Mammary epithelial cell (primary cell): ENCODE measurements at regions of chr17 and their contacts with region 1.

Region 1: DNA sequence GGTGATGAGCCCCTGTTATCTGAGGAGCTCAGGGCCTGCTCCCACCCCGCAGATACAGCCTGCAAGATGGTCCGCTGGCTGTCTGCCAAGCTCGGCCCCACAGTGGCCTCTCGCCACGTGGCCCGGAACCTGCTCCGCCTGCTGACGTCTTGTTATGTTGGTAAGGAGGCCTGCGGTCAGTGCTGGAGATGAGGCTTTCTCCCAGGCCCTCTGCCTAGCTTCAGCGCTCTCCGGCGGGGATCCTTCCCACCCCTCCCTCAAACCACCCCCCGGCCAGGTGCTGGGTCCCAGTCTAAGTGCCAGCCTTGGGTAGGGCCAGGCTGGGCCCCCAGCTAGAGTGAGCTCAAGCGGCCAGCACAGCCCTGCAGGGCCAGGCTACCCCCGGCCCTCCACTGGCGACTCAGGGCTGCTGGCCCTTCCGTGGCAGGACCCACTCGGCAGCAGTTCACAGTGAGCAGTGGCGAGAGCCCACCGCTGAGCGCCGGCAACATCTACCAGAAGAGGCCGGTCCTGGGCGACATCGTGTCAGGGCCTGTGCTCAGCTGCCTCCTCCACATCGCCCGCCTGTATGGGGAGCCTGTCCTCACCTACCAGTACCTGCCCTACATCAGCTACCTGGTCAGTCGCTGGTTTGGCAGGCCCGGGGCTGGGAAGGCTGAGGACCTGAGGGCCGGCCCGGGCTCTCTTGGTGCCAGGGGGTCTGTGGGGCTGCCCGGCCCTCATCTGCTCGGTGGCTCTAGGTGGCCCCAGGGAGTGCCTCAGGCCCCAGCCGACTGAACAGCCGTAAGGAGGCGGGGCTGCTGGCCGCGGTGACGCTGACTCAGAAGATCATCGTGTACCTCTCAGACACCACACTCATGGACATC is 6.1 kb downstream of the WDR81 start:
- DNase-seq: peak; percentile 85
- H3K4me3 ChIP-seq: peak overlapping the region in 1 of 3 experiments; percentile 1
- H3K27ac ChIP-seq: peak overlapping the region; percentile 89
- H3K4me1 ChIP-seq: peaks cover 34% of the 10 kb centered on the region
- H3K27me3 ChIP-seq: no peaks in the 10 kb centered on the region
- CTCF ChIP-seq: no peak

Region 2: DNA sequence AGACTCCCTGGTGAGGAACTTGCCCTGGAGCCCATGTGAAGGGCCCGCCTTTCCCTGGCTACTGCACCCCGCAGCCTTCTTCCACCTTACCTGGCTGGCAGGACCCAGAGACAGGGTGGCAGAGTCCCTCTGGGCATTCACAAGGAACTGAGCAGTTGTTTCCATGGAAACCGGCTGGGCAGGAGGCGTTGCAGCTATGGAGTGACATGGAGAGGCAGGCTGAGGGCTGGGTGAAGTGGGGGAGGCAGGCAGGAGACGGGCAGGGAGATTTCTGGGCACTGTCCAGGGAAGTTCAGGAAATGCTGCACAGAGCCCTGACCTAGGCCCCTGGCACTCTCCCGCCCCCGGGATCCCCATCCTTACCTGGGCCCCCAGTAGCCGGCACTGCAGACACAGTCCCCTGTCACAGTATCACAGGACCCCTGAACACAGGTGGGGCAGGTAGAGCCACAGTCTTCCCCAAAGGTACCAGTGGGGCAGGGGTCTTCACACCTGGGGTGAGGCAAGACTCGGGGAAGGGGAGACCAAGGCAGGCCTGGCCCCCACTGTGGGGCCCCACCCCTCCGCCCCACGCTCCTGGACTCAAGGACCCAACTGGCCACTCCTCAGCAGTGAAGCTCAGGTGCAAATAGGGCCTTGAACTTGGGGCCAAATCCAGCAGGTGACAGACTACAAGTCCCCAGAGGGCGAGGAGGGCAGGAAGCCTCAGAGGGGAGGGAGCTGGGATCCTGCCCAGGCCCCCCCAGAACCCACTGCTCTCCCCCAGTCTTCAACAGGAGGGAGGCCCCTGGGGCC is 90.8 kb before region 1 on chr17:
- CTCF ChIA-PET with region 1: no interaction called
- dilution Hi-C with region 1: loop called (anchors 5 kb)
- in situ Hi-C with region 1: no loop called
- intact Hi-C with region 1: no loop called
- DNase-seq: no peak
- H3K4me3 ChIP-seq: no peak overlapping the region
- H3K27ac ChIP-seq: no peak overlapping the region
- H3K4me1 ChIP-seq: peaks cover 15% of the 10 kb centered on the region
- H3K27me3 ChIP-seq: no peaks in the 10 kb centered on the region
- CTCF ChIP-seq: no peak

Region 3: DNA sequence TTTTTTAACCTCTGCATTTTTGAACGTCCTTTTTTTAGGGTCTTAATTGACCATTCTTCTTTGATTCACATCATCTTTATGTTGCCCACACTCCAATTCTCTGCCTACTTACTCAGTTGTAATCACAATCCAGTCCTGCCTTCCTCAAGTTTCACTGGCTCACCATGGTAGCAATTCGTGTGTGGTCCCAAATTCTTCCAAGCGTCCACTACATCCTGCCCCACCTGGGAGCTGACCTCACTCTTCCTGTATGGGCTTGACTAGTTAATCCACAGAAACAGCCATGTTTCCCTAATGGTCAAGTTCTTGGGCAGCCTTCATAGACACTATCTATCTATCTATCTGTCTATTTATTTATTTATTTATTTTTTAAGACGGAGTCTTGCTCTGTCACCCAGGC is 27.5 kb before region 1 on chr17:
- CTCF ChIA-PET with region 1: no interaction called
- dilution Hi-C with region 1: no loop called
- in situ Hi-C with region 1: no loop called
- intact Hi-C with region 1: no loop called
- DNase-seq: no peak
- H3K4me3 ChIP-seq: no peak overlapping the region
- H3K27ac ChIP-seq: no peak overlapping the region
- H3K4me1 ChIP-seq: no peaks in the 10 kb centered on the region
- H3K27me3 ChIP-seq: no peaks in the 10 kb centered on the region
- CTCF ChIP-seq: no peak

Region 4: DNA sequence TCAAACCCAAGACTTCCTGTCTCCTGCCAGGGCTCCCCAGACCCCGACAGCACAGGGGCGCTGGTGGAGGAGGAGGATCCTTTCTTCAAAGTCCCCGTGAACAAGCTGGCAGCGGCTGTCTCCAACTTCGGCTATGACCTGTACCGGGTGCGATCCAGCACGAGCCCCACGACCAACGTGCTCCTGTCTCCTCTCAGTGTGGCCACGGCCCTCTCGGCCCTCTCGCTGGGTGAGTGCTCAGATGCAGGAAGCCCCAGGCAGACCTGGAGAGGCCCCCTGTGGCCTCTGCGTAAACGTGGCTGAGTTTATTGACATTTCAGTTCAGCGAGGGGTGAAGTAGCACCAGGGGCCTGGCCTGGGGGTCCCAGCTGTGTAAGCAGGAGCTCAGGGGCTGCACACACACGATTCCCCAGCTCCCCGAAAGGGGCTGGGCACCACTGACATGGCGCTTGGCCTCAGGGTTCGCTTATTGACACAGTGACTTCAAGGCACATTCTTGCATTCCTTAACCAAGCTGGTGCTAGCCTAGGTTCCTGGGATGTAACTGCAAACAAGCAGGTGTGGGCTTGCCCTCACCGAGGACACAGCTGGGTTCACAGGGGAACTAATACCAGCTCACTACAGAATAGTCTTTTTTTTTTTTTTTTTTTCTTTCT is 39.4 kb after region 1 on chr17:
- CTCF ChIA-PET with region 1: no interaction called
- dilution Hi-C with region 1: no loop called
- in situ Hi-C with region 1: loop called in 1 of 2 experiments (anchors 5 kb)
- intact Hi-C with region 1: no loop called
- DNase-seq: peak; percentile 94
- H3K4me3 ChIP-seq: no peak overlapping the region
- H3K27ac ChIP-seq: peak overlapping the region; percentile 76
- H3K4me1 ChIP-seq: peaks cover 19% of the 10 kb centered on the region
- H3K27me3 ChIP-seq: no peaks in the 10 kb centered on the region
- CTCF ChIP-seq: no peak

Region 5: GRCh38 chr17:1829592-1830257 is 99.2 kb after region 1 on chr17 and contains the starts of genes RPA1 and SMYD4:
- CTCF ChIA-PET with region 1: no interaction called
- dilution Hi-C with region 1: loop called (anchors 5 kb)
- in situ Hi-C with region 1: no loop called
- intact Hi-C with region 1: no loop called
- DNase-seq: peak; percentile 87
- H3K4me3 ChIP-seq: peak within 1 kb of the TSS; percentile 78 to 97 (median 85)
- H3K27ac ChIP-seq: peak within 1 kb of the TSS; percentile 46
- H3K4me1 ChIP-seq: peaks cover 5% of the 10 kb centered on the region
- H3K27me3 ChIP-seq: no peaks in the 10 kb centered on the region
- CTCF ChIP-seq: no peak
- total RNA-seq, gene RPA1: 17.2 to 78.5 TPM
- total RNA-seq, gene SMYD4: 12.7 to 15.0 TPM